ENCODE measurements at regions of chr2 and their contacts with region 1.

Region 1: GRCh38 chr2:203909261-203909967 is 27.1 kb upstream of the ICOS start:
- DNase-seq: peak; percentile 83
- H3K4me3 Mint-ChIP-seq: peak overlapping the region; percentile 63
- H3K27ac Mint-ChIP-seq: peak overlapping the region; percentile 76
- H3K4me1 Mint-ChIP-seq: peaks cover 19% of the 10 kb centered on the region
- H3K27me3 Mint-ChIP-seq: peaks cover 7% of the 10 kb centered on the region

Region 2: DNA sequence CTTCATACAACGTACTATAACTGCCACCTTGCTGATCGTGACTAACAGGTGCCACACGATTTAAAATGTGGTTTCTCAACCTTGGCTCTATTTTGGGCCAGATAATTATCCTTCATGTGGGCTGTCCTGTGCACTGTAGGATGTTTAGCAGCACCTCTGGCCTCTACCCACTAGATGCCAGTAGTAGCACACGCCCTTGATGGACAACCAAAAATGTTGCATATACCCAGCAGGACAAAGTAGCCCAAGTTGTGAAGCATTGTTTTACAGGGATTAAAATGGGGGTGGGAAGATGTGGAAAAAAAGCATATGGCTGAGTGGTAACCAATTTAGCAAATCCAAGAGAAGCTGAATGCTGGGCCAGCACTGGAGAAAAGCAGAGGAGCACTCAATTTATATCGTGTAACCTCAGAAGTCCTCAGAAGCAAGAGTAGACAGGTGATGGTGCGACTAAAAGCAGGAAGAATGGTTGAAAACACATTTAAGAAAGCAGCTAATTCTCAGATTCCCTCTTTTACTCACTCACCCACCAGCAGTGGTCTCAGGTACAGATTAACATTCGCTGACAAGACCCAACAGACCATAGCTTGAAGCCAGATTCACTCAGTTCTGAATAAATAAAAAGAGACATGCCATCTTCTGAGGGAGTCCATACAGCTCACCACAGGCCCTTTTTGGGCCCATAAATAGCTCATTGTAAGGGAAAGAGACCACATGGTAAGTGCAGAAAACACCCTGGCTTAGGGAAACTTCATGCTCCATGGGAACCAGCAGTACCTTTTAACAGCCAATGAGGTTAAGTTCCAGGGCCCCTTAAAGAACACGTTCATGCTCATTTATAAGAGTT is 424.9 kb before region 1 on chr2:
- intact Hi-C with region 1: loop called (anchors 1 kb)
- DNase-seq: peak; percentile 84
- H3K4me3 Mint-ChIP-seq: no peak overlapping the region
- H3K27ac Mint-ChIP-seq: peak overlapping the region; percentile 9
- H3K4me1 Mint-ChIP-seq: peaks cover 7% of the 10 kb centered on the region
- H3K27me3 Mint-ChIP-seq: no peaks in the 10 kb centered on the region

Region 3: DNA sequence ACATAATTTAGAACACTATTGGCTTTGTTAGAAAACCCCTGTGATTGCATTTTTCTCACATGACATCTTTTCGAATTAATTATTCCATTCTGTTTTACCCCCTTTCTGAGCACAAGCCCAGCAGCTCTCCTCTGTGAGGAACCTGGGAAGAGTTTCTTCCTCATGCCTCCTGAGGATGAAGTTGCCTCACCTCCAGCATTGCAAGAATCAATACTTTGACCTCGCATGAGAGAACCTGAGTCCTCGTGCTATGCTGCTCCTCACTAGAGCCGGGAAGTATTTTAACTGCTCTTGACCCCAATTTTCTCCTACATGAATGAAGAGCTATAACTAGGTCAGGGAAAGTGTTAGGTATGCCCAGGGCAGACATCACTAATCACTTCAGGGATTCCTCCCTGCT is 297.1 kb before region 1 on chr2:
- intact Hi-C with region 1: no loop called
- DNase-seq: no peak
- H3K4me3 Mint-ChIP-seq: no peak overlapping the region
- H3K27ac Mint-ChIP-seq: no peak overlapping the region
- H3K4me1 Mint-ChIP-seq: no peaks in the 10 kb centered on the region
- H3K27me3 Mint-ChIP-seq: peaks cover 8% of the 10 kb centered on the region

Region 4: DNA sequence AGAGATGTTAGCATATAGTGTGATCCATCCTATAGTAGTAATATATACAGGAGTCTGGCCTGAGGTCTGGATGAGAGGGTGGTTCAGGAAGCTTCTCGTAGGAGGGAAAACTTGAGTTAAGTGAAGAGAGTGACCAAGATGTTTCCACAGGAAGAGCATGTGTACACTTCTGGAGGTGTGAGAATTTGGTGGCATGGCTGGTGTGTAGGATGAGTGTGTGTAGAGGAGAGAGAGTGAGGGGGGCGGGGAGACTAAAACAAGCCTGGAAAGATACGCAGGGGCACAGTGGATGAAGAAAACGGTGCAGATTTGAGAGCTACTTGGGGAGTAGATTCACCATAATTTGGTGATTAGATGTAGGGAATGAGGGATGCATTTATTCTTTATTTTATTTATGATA is 85.4 kb before region 1 on chr2:
- intact Hi-C with region 1: loop called (anchors 1 kb)
- DNase-seq: no peak
- H3K4me3 Mint-ChIP-seq: peak overlapping the region; percentile 7
- H3K27ac Mint-ChIP-seq: peak overlapping the region; percentile 54
- H3K4me1 Mint-ChIP-seq: peaks cover 34% of the 10 kb centered on the region
- H3K27me3 Mint-ChIP-seq: no peaks in the 10 kb centered on the region

Region 5: GRCh38 chr2:203893401-203893800 is 16.0 kb before region 1 on chr2:
- intact Hi-C with region 1: loop called (anchors 1 kb)
- DNase-seq: no peak
- H3K4me3 Mint-ChIP-seq: peak overlapping the region; percentile 21
- H3K27ac Mint-ChIP-seq: peak overlapping the region; percentile 62
- H3K4me1 Mint-ChIP-seq: peaks cover 65% of the 10 kb centered on the region
- H3K27me3 Mint-ChIP-seq: no peaks in the 10 kb centered on the region

Measured in activated CD4-positive, alpha-beta T cell treated with anti-CD3 and anti-CD28 coated beads, Interleukin-2, amount 10 ng/mL, durations not matched to agents 24 days and 14 days (primary cell).